Activated naive CD4-positive, alpha-beta T cell treated with anti-CD3 and anti-CD28 coated beads for 36 hours (primary cell): ENCODE measurements at regions of chr2 and their contacts with region 1.

Region 1: GRCh38 chr2:143259368-143259958 is 130.2 kb downstream of the ARHGAP15 start:
- DNase-seq: peak; percentile 89
- H3K4me3 Mint-ChIP-seq: peak overlapping the region; percentile 59
- H3K27ac Mint-ChIP-seq: peak overlapping the region; percentile 90
- H3K4me1 Mint-ChIP-seq: peaks cover 73% of the 10 kb centered on the region
- H3K27me3 Mint-ChIP-seq: no peaks in the 10 kb centered on the region

Region 2: DNA sequence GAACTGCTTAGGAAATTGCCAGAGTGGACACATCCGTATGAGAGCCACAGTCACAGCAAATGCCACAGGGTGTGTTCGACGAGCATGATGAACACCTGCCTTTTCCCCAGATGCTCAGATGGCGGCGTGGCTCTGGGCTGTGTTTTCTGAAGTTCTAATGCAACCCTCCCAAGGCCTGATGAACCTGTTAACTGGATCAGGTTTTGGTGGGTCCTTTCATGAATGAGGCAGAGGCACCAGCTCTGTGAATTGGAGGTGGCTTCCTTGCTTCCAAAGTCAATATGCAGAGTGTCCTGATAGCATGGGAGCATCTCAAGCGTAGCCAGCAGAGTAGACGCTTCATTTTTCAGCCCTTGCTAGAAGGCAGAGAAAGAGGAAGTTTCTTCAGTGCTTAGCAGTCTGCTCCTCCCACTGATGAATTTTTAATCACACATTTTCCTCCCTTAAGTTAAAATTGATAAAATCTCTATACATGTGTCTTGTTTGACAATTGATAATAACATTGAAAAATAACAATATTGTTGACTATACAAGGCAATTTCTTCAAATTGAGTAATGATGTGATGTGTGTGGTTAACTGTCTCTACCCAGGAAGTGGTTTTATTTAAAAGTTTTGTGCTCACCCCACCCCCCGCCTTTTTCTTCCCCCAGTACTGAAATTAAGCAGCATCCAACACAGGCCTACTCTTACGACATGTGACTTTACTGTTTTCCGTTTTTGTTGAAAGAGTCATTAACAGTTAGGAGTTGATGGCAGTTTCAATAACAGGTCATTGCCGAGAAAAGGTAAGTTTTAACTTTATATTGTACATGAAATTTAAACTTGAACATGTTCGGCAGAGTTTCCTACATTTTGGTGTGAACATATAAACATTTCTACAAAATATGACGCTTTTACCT is 130.5 kb before region 1 on chr2 and contains the start of gene ARHGAP15:
- CTCF ChIA-PET with region 1: interaction called, 21 read pairs
- intact Hi-C with region 1: loop called (anchors 1 kb)
- DNase-seq: peak; percentile 88
- H3K4me3 Mint-ChIP-seq: peak within 1 kb of the TSS; percentile 86
- H3K27ac Mint-ChIP-seq: peak within 1 kb of the TSS; percentile 100
- H3K4me1 Mint-ChIP-seq: peaks cover 31% of the 10 kb centered on the region
- H3K27me3 Mint-ChIP-seq: no peaks in the 10 kb centered on the region
- total RNA-seq, gene ARHGAP15: 85.7 to 90.1 TPM

Region 3: DNA sequence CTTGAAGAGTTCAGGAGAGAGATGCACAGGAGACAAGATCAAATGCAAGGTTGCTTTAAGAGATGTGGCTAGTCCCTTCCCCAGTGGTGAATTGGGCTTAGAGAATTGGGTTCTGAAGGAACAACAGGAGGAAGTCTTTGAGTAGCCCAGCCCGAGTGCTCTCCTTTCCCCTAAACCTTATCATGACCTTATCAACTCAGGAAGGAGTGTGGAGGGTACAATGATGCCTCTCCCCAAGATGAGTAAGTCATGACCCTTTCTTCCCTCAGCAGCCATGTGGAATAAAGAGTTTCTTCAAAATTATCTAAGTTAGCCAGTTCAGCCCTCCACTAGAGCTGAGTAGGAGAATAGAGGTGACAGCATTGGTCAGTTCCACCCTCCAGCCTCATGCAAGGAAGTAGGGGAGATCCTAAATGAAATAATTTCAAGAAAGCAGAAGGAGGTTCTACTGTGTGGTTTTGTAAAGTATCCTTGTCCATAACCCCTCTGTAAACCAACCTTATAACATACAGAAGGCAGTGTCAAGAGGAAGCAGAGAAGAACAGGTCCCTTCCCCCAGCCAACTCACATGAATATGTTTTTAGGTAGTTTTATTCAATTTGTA is 41.8 kb before region 1 on chr2:
- CTCF ChIA-PET with region 1: interaction called, 28 read pairs
- intact Hi-C with region 1: loop called (anchors 1 kb)
- DNase-seq: no peak
- H3K4me3 Mint-ChIP-seq: no peak overlapping the region
- H3K27ac Mint-ChIP-seq: peak overlapping the region; percentile 48
- H3K4me1 Mint-ChIP-seq: peaks cover 32% of the 10 kb centered on the region
- H3K27me3 Mint-ChIP-seq: no peaks in the 10 kb centered on the region

Region 4: GRCh38 chr2:143284087-143284675 is 24.7 kb after region 1 on chr2:
- CTCF ChIA-PET with region 1: interaction called, 15 read pairs
- intact Hi-C with region 1: loop called (anchors 1 kb)
- DNase-seq: peak; percentile 38
- H3K4me3 Mint-ChIP-seq: no peak overlapping the region
- H3K27ac Mint-ChIP-seq: no peak overlapping the region
- H3K4me1 Mint-ChIP-seq: peaks cover 48% of the 10 kb centered on the region
- H3K27me3 Mint-ChIP-seq: no peaks in the 10 kb centered on the region

Region 5: GRCh38 chr2:144183727-144184126 is 924.3 kb after region 1 on chr2:
- CTCF ChIA-PET with region 1: no interaction called
- intact Hi-C with region 1: loop called (anchors 5 kb)
- DNase-seq: peak; percentile 89
- H3K4me3 Mint-ChIP-seq: peak overlapping the region; percentile 52
- H3K27ac Mint-ChIP-seq: peak overlapping the region; percentile 81
- H3K4me1 Mint-ChIP-seq: peaks cover 42% of the 10 kb centered on the region
- H3K27me3 Mint-ChIP-seq: no peaks in the 10 kb centered on the region

Region 6: GRCh38 chr2:144516981-144517865 is 1257.8 kb after region 1 on chr2:
- CTCF ChIA-PET with region 1: no interaction called
- intact Hi-C with region 1: loop called (anchors 5 kb)
- DNase-seq: peak; percentile 63
- H3K4me3 Mint-ChIP-seq: no peak overlapping the region
- H3K27ac Mint-ChIP-seq: peak overlapping the region; percentile 88
- H3K4me1 Mint-ChIP-seq: peaks cover 15% of the 10 kb centered on the region
- H3K27me3 Mint-ChIP-seq: peaks cover 50% of the 10 kb centered on the region